Activated T-helper 1 cell treated with anti-CD3 and anti-CD28 coated beads, Interleukin-12 subunit alpha, Interleukin-12 subunit beta, Interleukin-2, Interleukin-4 antibody, amounts not matched to agents 30 ng/mL and 10 ng/mL and 1 ng/mL, durations not matched to agents 14 hours and 24 hours and 36 hours (primary cell): ENCODE measurements at regions of chr13 and their contacts with region 1.

Region 1: DNA sequence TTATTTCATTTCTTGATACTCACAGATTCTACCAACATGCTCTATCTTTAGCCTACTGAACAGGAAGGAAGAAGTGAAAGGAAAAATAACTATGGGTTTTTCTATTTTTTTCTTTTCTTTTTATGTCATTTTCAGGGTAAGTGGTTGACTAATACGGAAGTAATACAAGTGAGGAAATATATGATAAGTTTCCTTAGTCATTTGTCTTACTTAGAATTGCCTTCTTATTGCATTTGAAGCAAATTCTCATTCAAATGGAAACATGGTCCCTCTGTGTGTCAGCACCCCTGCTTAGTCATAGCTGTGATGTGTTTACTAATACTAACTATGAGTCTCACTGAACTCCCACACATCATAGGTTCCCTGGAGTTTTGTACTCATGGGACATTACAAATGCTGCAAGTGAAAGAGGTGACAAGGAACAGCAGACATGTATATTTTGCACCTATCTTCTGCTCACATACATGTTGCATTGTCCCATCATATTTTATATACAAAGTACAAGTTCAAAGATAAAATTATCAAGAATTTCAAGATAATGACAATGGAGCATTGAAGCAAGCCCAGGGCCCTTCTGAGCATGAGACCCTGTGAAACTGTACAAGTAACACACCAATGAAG is 60.1 kb downstream of the DCT start:
- DNase-seq: no peak
- H3K4me3 Mint-ChIP-seq: peak overlapping the region; percentile 29
- H3K27ac Mint-ChIP-seq: peak overlapping the region; percentile 72
- H3K4me1 Mint-ChIP-seq: peaks cover 22% of the 10 kb centered on the region
- H3K27me3 Mint-ChIP-seq: no peaks in the 10 kb centered on the region

Region 2: GRCh38 chr13:94009701-94010100 is 409.7 kb before region 1 on chr13:
- intact Hi-C with region 1: no loop called
- DNase-seq: no peak
- H3K4me3 Mint-ChIP-seq: no peak overlapping the region
- H3K27ac Mint-ChIP-seq: no peak overlapping the region
- H3K4me1 Mint-ChIP-seq: no peaks in the 10 kb centered on the region
- H3K27me3 Mint-ChIP-seq: no peaks in the 10 kb centered on the region

Region 3: DNA sequence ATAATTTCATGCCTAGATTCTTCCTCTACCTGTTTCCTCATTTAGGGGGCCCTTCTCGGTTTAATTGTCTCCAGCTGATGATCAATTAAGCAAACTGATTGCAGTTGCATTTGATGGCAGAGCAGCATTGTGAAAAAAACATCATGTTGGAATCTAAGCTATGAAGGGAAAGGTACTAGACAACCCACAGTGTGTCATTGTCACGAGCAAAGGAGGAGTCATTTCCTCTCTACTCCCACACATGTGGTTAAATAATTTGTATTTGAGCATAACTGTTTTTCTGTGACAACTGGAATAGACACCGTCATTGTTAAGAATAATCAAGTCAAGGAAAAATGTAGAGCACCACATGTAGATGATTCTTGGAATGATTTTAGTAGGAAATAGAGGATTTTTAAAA is 180.3 kb before region 1 on chr13:
- intact Hi-C with region 1: loop called (anchors 1 kb)
- DNase-seq: no peak
- H3K4me3 Mint-ChIP-seq: peak overlapping the region; percentile 20
- H3K27ac Mint-ChIP-seq: peak overlapping the region; percentile 35
- H3K4me1 Mint-ChIP-seq: peaks cover 36% of the 10 kb centered on the region
- H3K27me3 Mint-ChIP-seq: peaks cover 8% of the 10 kb centered on the region

Region 4: GRCh38 chr13:94345374-94346195 is 73.8 kb before region 1 on chr13:
- intact Hi-C with region 1: loop called (anchors 1 kb)
- DNase-seq: no peak
- H3K4me3 Mint-ChIP-seq: no peak overlapping the region
- H3K27ac Mint-ChIP-seq: no peak overlapping the region
- H3K4me1 Mint-ChIP-seq: peaks cover 28% of the 10 kb centered on the region
- H3K27me3 Mint-ChIP-seq: peaks cover 6% of the 10 kb centered on the region

Region 5: DNA sequence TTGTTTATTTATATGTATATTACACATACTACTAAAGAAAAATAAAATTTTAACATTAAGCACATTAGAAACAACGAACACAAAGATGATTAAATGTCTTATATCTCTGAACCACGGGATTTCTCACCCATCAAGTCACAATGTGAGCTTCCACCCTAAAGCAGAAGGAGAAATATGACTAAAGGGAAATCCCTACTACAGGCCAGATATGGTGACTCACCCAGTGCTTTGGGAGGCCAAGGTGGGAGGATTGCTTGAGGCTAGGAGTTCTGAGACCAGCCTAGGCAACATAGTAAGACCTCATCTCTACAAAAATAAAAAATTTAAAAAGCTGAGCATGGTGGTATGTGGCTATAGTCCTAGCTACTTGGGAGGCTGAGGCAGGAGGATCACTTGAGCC is 35.5 kb after region 1 on chr13:
- intact Hi-C with region 1: loop called (anchors 1 kb)
- DNase-seq: no peak
- H3K4me3 Mint-ChIP-seq: no peak overlapping the region
- H3K27ac Mint-ChIP-seq: no peak overlapping the region
- H3K4me1 Mint-ChIP-seq: no peaks in the 10 kb centered on the region
- H3K27me3 Mint-ChIP-seq: peaks cover 1% of the 10 kb centered on the region

Region 6: DNA sequence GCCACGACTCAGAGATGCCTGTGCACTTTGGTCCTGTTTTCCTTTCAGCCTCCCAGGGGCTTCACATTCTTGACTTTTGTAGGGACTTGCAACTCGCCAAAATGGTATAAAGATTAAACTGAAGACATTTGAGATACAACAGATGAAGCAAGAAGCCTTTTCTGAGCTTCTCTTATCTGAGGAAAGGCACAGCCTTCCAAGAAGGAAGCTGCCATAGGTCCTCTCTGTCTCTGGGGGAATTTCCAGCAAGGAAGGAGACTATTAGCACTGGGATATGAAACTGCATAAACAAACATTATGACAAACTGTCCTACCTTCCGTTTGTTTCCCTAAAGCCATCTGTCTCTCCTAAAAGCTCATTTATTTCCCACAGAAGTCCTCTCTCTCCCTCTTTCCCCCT is 137.2 kb after region 1 on chr13:
- intact Hi-C with region 1: no loop called
- DNase-seq: no peak
- H3K4me3 Mint-ChIP-seq: no peak overlapping the region
- H3K27ac Mint-ChIP-seq: no peak overlapping the region
- H3K4me1 Mint-ChIP-seq: peaks cover 22% of the 10 kb centered on the region
- H3K27me3 Mint-ChIP-seq: peaks cover 3% of the 10 kb centered on the region

Region 7: DNA sequence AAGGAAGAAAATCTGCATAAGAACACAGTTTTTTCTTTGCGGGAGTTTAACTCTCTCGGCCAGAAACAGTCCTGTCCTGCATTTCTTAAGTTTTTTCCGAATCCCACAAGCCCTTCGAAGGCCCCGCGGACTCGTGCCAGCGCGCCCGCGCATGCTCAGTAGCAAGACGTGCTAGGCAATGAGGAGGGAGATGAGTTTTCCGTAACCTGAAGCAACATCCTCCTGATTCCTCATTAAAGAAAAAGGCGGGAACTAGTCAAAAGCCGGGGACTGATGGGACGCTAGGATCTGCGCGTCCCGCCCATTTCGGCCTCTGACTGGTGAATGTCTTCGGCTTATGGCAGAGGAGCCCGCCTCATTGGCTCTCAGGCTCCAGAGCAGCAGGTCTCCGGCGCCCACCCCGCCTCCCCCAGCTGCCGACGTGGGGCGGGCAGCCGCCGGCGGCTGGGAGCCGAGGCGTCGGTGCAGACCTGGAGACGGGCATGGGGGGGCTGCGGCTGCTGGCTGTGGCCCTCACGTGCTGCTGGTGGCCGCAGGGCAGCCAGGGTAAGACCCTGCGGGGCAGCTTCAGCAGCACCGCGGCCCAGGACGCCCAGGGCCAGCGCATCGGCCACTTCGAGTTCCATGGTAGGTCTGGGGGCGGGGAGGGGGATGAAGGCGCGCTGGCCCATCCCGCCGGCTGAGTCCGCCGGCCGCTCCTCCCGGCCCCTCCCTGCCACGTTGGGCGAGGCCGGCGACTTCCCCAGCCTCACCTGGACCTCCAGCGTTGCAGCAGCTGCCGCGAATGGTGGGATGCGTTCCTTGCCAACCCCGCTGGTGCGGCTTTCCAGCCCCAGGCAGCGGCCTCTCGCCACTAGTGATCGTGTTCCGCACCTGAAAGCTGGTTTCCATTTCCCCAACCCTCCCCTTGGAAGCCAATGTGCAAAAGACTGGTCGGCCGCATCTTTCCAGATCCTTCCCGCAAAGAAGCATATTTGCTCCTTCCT is 182.3 kb after region 1 on chr13 and contains the start of gene GPR180:
- intact Hi-C with region 1: loop called (anchors 1 kb)
- DNase-seq: peak; percentile 89
- H3K4me3 Mint-ChIP-seq: peak within 1 kb of the TSS; percentile 88
- H3K27ac Mint-ChIP-seq: peak within 1 kb of the TSS; percentile 75
- H3K4me1 Mint-ChIP-seq: peaks cover 31% of the 10 kb centered on the region
- H3K27me3 Mint-ChIP-seq: no peaks in the 10 kb centered on the region
- total RNA-seq, gene GPR180: 9.6 and 11.1 TPM in 2 replicates